ENCODE measurements at regions of chr4 and their contacts with region 1.

Region 1: DNA sequence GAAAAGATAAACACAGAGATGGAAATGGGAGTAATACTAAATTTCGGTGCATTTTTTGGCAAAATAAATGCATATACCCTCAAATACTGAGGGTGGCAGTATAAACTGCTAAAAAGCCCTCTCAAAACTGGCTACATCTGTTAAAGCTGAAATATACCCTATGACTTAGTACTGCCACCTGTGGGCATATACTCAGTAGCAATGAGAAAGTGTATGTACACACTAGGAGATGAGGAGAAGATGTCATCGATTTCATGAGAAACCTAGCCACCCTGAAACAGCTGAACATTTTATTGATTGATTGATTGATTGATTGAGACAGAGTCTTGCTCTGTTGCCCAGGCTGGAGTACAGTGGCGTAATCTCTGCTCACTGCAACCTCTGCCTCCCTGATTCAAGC is 12.2 kb upstream of the TMEM128 start:
- DNase-seq: no peak
- H3K4me3 ChIP-seq: no peak overlapping the region
- H3K27ac ChIP-seq: no peak overlapping the region
- H3K27me3 ChIP-seq: peaks cover 16% of the 10 kb centered on the region
- CTCF ChIP-seq: peak; percentile 49

Region 2: DNA sequence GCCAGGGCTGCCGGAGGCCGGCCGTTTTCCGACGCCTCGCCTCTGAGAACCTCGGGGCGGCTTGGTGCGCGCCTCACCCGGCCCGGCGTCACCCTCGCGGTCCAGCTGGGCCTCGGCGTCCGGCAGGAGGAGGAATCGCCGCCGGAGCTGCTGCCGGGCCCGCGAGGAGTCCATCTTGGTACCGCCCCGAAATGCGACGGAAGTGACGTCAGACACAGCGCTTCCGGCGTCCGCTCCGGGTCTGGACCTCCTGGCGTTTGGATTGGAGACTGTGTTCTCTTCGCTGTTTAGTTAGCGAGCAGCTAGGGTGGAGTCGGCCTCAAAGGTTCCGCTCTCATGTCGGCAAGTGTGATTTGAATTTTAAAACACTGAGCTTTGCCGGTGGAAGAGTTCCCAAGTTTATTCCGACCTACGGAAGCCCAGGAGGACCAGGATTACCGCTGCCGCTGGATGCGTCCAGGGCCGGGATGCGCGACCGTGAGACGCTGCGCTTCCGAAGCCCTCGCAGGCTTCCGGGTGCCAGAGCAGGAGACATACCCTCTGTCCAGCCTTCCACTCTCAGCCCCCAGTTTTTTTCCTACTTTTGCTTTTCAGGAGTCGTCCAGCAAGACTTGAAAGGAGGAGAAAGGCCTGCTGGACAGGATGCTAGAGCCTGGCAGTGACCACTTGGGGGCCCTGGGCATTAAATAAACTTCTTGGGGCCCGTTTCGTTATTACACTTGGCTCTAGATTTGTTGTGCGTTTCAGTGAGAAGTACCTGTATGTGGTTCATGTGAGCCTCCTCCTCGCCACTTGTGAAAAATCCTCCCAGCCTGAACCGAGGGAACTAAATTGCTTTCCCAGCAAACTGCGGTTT is 12.0 kb before region 1 on chr4 and contains the start of gene TMEM128:
- CTCF ChIA-PET with region 1: interaction called, 17 read pairs
- POLR2A ChIA-PET with region 1: interaction called, 3 read pairs
- DNase-seq: peak; percentile 83
- H3K4me3 ChIP-seq: peak within 1 kb of the TSS; percentile 90
- H3K27ac ChIP-seq: peak within 1 kb of the TSS; percentile 96
- H3K27me3 ChIP-seq: peaks cover 3% of the 10 kb centered on the region
- CTCF ChIP-seq: peak; percentile 34
- polyA plus RNA-seq, gene TMEM128: 32.3 and 44.0 TPM in 2 replicates

Region 3: DNA sequence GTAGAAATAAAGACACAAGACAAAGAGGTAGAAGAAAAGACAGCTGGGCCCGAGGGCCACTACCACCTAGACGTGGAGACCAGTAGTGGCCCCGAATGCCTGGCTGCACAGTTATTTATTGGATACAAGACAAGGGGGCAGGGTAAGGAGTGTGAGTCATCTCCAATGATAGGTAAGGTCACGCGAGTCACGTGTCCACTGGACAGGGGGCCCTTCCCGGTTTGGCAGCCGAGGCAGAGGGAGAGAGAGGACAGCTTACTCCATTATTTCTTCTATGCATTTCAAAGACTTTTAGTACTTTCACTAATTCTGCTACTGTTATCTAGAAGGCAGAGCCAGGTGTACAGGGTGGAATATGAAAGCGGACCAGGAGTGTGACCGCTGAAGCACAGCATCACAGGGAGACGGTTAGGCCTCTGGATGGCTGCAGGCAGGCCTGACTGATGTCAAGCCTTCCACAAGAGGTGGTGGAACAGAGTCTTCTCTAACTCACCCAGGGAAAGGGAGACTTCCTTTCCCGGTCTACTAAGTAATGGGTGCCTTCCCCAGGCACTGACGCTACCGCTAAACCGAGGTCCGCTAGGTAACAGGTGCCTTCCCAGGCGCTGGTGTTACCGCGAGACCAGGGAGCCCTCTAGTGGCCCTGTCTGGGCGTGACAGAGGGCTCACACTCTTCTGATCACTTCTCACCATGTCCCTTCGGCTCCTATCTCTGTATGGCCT is 74.7 kb after region 1 on chr4:
- CTCF ChIA-PET with region 1: interaction called, 11 read pairs
- POLR2A ChIA-PET with region 1: no interaction called
- DNase-seq: no peak
- H3K4me3 ChIP-seq: no peak overlapping the region
- H3K27ac ChIP-seq: no peak overlapping the region
- H3K27me3 ChIP-seq: peaks cover 7% of the 10 kb centered on the region
- CTCF ChIP-seq: peak; percentile 81

Region 4: DNA sequence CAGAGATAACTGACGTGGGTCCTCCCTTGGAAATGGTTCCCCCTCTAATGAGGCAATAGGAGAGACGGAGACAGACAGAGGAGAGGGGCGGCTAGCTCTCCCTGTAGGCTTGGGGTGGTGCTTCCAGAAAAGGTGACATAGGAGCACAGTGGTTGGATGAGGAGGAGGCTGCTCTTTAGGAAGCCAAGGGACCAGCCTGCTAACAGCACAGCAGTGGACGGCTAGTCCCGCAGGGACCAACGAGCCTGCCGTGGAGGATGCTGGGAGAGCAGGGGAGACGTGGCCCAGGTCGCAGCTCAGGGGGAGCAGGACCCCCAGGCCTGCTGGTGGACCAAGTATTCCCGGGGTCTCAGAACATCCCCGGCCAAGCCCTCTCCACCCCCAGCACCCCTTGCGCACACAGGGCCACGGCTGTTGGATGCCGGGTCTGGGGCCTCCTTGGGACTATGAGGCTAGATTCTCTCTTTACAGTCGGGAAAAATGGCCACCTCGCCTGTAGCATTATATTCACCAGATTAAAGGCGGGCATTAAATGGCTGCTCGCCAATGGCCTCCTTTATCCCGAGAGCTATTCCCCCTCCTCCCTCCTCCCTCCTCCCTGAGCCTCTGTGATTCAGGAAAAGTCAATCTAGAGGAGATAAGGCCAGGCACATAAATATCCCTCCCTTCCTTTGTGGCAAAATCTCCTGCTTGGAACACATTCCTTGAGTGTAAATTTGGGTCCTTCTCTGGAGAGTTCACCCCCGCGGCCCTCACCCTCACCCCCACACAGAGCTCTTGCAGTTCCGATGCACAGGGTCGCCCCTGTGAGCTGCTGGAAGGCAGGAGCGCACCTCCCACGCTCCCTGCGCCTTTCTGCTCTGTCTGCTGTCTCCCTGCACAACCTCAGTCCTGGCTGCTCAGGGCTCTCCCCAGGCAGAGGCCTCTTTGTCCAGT is 96.1 kb after region 1 on chr4:
- CTCF ChIA-PET with region 1: no interaction called
- POLR2A ChIA-PET with region 1: no interaction called
- DNase-seq: no peak
- H3K4me3 ChIP-seq: no peak overlapping the region
- H3K27ac ChIP-seq: no peak overlapping the region
- H3K27me3 ChIP-seq: peaks cover 27% of the 10 kb centered on the region
- CTCF ChIP-seq: no peak

Region 5: DNA sequence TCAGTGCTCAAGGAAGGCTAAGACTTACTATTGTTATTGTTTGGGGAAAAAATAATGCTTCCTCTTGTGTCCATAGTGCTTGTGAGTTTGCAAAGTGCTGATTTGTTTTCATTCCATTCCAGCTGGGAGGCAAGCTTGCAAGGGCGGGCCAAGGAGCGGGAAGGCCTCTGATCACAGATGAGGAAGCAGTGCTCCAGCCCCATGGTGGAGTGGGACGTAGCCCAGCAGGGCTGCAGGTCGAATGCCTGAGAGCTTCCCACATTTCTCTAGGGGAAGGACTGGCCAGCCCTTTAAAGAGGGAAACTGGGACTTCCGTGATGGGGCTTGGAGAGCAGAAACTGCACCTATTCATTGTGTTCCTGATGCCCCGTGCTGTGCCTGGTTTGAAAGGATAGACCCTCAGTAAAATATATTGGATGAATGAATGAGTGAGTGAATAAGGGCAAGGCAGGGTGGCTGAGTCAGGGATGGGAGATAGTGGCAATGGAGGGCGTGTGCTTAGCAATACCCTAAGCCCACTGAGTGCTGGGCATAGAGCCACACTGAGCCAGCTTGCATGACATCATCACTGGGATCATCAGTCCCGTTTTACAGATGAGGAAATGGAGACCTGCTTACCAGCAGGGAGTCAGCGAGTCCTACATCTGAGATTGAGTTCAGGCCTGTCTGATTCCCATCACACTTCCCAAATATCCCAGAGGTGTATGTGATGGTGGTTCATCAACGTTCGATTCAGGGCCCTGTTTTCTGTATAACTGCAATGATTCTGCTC is 108.7 kb after region 1 on chr4:
- CTCF ChIA-PET with region 1: no interaction called
- POLR2A ChIA-PET with region 1: no interaction called
- DNase-seq: no peak
- H3K4me3 ChIP-seq: no peak overlapping the region
- H3K27ac ChIP-seq: no peak overlapping the region
- H3K27me3 ChIP-seq: peaks cover 13% of the 10 kb centered on the region
- CTCF ChIP-seq: no peak

Measured in AG04450 (cell line).